CD4-positive, alpha-beta T cell (primary cell): ENCODE measurements at regions of chr17 and their contacts with region 1.

Region 1: DNA sequence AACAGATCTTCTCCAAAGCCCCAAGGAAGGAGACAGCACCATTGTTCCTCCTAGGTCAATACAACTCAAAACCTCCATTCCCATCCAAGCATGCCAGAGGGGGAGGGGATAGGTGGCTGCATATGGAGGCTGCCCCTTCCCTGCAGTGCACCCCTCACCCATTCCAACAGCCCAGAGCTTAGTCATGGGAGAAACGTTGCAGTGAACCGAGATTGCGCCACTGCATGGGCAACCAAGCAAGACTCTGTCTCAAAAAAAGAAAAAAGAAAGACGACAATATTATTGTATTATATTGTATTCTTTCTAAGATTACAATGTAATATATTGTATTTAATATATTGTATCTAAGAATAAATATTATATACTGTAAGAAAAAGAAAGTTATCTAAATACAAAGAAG is 36.4 kb upstream of the CD300E start:
- DNase-seq: no peak
- ATAC-seq: no peak
- H3K4me3 ChIP-seq: no peak overlapping the region
- H3K4me3 Mint-ChIP-seq: no peak overlapping the region
- H3K27ac ChIP-seq: no peak overlapping the region
- H3K27ac Mint-ChIP-seq: no peak overlapping the region
- H3K4me1 ChIP-seq: peaks cover 6% of the 10 kb centered on the region
- H3K4me1 Mint-ChIP-seq: peaks cover 5% of the 10 kb centered on the region
- H3K27me3 ChIP-seq: peaks cover 5 to 12% of the 10 kb centered on the region in 2 experiments
- H3K27me3 Mint-ChIP-seq: peaks cover 52% of the 10 kb centered on the region
- CTCF ChIP-seq: no peak

Region 2: DNA sequence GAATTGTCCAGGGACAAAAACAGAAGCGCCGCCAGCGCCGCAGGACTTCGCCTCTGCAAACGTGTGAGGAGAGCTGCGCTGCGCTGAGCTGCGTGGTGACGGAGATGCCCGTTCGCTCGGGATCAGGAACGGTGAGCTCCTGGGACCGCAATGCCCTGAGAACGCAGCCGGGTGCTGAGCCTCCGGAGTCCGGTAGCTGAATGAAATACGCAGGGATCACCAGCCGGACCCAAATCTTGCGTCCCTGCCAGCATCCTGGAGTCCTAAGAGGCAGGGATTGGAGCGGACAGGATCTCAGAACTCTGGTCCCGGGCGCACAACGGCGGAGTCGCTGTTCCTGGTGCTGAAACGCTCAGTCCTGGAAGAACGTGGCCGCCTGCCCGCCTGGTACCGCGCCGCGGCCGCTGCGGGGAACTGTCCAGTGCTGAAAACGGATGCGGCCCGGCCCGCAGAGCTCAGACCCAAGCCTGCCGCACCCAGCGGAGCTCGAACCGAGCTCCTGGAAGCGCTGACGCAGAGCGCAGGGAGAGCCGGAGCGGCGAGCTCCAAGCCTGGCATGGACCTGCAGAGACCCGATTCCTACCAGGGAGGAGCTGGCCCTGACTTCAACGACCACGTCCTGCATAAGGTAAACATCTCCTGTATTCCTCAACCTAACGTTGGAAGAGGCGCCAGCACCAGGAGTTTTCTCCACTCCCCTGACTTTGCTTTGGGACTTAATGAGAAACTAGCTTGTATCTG is 11.3 kb after region 1 on chr17:
- CTCF ChIA-PET with region 1: interaction called, 12 read pairs
- POLR2A ChIA-PET with region 1: interaction called, 6 read pairs
- intact Hi-C with region 1: no loop called
- DNase-seq: peak; percentile 60 to 90 (median 68)
- ATAC-seq: peak; percentile 94
- H3K4me3 ChIP-seq: no peak overlapping the region
- H3K4me3 Mint-ChIP-seq: no peak overlapping the region
- H3K27ac ChIP-seq: no peak overlapping the region
- H3K27ac Mint-ChIP-seq: no peak overlapping the region
- H3K4me1 ChIP-seq: peaks cover 10% of the 10 kb centered on the region
- H3K4me1 Mint-ChIP-seq: no peaks in the 10 kb centered on the region
- H3K27me3 ChIP-seq: peaks cover 16 to 45% of the 10 kb centered on the region in 2 experiments
- H3K27me3 Mint-ChIP-seq: peaks cover 72% of the 10 kb centered on the region
- CTCF ChIP-seq: no peak

Region 3: DNA sequence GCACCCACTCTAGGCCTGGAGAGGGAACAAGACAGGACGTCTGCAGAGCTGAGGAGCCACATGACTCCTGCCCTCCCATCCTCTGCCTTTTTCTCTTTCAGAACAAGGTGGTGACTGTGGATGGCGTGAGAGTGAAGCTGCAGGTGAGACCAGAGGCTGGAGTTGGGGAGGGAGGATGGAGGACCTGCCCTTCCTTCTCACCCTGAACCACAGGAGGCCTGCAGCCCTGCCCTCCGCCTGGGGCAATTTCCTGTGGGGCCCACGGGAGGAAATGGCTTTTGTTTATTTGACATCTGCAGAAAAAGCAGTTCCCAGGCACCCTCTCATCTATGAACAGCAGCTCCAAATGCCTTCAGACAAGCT is 82.2 kb after region 1 on chr17:
- CTCF ChIA-PET with region 1: interaction called, 101 read pairs
- POLR2A ChIA-PET with region 1: interaction called, 54 read pairs
- intact Hi-C with region 1: loop called in 1 of 2 experiments (anchors 1 kb)
- DNase-seq: peak in 11 of 14 experiments; percentile 32 to 81 (median 62)
- ATAC-seq: peak; percentile 5
- H3K4me3 ChIP-seq: peak overlapping the region; percentile 32
- H3K4me3 Mint-ChIP-seq: peak overlapping the region; percentile 82
- H3K27ac ChIP-seq: peak overlapping the region; percentile 58 to 65
- H3K27ac Mint-ChIP-seq: peak overlapping the region; percentile 91
- H3K4me1 ChIP-seq: peaks cover 100% of the 10 kb centered on the region
- H3K4me1 Mint-ChIP-seq: peaks cover 86% of the 10 kb centered on the region
- H3K27me3 ChIP-seq: no peaks in the 10 kb centered on the region
- H3K27me3 Mint-ChIP-seq: no peaks in the 10 kb centered on the region
- CTCF ChIP-seq: no peak